KBM-7 (cell line): ENCODE measurements at regions of chr5 and their contacts with region 1.

Region 1: DNA sequence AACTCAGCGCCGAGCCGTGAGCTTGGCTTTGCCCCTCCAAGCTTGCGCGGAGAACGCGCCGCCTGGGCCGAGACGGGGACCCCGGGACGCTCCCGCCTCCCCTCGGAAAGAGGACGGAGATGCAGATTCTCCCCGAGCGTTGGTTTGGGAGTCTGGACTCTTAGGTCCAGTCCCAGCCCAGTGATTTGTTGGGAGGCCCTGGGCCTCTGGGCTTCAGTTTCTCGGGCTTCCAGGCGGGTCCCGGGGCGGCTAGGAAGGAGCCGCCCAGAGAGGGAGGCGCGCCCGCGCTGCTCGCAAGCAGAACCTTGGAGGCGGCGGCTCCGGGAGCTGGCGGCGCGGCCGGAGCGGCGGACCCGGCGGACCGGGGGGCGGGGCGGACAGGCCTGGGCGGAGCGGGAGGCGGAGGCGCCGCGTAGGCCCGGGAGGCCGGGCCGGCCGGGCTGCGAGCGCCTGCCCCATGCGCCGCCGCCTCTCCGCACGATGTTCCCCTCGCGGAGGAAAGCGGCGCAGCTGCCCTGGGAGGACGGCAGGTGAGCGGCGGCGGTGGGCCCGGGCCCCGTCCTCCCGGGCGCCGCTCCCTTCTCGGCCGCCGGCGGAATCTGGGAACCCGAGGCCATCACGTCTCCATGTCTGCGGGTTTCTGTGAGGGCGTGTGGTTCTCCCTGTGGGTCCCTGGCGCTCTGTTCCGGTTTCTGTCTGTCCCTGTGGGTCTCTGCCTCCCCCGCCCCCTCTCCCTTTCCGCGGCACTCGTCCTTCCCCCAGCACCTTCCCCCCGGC is at the start of gene B4GALT7:
- DNase-seq: peak; percentile 75

Region 2: DNA sequence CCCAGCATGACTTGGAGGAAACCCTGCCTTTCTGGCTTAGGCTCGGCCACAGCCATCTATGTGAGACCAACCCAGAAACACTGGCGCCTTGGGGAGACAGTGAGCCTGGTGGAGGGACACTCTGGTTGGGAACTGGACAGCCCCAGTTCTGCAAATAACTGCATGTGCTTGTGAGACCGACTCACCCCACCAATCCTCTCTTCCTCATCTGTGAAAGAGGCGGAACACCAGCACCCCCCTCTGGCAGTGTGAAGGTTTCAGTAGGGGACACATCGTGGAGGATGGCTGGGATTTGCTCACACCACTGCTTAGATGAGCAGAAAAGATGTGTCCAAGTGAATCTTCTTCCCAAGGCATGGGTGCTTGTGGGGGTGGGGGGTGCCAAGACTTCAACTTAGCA is 470.0 kb after region 1 on chr5:
- in situ Hi-C with region 1: loop called (anchors 25 kb)
- DNase-seq: peak; percentile 80